ENCODE measurements at regions of chr15 and their contacts with region 1.

Region 1: DNA sequence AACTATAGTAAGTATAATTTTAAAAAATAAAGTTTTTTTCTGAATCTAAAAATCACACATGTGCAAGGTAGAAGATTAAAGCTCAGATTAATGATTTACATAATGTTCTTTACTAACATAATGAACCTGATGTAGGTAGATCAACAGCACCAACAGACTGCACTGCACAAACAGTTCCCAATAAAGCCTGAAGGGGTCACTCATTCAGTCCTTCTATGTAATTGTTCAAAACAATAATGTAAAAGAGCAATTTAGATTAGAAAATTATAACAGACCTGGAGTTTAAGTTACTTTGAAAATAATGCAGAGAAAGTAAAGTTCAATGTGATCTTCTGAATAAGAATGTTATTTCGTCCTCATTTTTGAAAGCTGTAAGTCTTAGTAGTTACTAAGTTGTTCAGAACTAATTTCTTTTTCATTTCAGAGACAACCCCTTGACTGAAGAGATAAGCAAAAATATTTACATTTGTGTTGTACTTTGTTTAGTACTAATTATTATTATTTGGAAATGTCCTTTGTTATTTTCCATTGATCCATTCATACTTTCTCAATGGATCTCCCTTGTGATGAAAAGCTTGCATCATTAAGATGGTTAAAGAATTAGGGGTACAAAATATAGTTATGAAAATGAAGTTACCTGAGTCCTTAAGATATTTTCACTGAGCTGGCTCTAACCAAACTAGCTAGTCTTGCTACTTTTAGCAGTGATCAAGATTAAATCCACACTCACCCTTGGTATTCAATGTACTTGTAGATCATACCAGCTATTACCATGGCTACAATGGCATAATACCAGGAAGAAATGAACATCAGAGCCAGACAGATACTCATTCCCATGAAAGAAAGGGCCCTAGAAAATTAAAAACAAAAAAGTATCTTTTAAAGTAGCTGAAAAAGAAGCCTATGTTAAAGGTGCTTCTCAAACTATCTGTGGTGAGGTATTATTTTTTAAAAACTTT is 16.8 kb downstream of the EMC4 start:
- DNase-seq: peak; percentile 55
- H3K4me3 Mint-ChIP-seq: no peak overlapping the region
- H3K27ac Mint-ChIP-seq: no peak overlapping the region
- H3K4me1 Mint-ChIP-seq: peaks cover 14% of the 10 kb centered on the region
- H3K27me3 Mint-ChIP-seq: no peaks in the 10 kb centered on the region

Region 2: GRCh38 chr15:34223904-34224596 is 17.6 kb before region 1 on chr15:
- CTCF ChIA-PET with region 1: interaction called, 10 read pairs
- DNase-seq: no peak
- H3K4me3 Mint-ChIP-seq: peak overlapping the region; percentile 96
- H3K27ac Mint-ChIP-seq: peak overlapping the region; percentile 94
- H3K4me1 Mint-ChIP-seq: peaks cover 38% of the 10 kb centered on the region
- H3K27me3 Mint-ChIP-seq: peaks cover 9% of the 10 kb centered on the region

Region 3: GRCh38 chr15:34327906-34328305 is 86.3 kb after region 1 on chr15:
- CTCF ChIA-PET with region 1: interaction called, 13 read pairs
- DNase-seq: no peak
- H3K4me3 Mint-ChIP-seq: peak overlapping the region; percentile 50
- H3K27ac Mint-ChIP-seq: peak overlapping the region; percentile 84
- H3K4me1 Mint-ChIP-seq: peaks cover 63% of the 10 kb centered on the region
- H3K27me3 Mint-ChIP-seq: no peaks in the 10 kb centered on the region

Region 4: DNA sequence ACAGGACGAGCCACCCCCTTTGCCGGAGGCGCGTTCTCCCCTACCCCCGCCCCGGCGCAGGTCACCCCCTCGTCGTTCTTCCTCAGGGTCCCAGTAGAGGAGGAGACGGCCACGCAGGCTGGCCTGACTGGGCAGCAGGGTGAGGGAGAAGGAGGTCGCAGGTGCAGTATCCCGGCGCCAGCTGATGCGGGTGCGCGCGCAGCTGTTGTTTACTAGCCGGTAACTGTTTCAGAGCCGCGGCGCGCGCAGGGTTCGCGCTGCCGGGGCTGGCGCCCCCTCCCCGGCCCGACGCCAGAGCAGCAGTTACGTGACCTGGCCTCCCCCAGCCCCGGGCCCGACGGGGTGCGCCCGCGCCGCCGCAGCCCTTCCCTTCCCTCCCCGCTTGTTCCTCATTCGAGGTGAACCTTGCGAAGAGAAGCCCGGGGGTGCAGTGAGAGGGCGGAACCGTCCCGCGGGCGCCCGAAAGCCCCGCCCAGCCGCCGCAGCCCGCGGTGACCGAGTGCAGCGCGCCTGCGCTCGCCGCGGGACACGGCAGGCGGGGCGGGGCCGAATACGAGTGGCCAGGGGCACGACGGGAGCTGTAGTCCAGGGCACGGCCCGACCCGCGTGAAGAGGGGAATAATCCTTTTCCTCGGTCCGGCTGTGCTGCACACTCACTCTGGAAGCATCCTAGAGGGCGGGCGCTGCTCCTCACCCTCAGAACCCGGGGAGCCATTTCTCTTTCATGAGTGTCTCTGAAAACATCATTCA is 96.1 kb after region 1 on chr15 and contains the start of gene SLC12A6:
- CTCF ChIA-PET with region 1: interaction called, 11 read pairs
- DNase-seq: peak; percentile 92
- H3K4me3 Mint-ChIP-seq: peak within 1 kb of the TSS; percentile 98
- H3K27ac Mint-ChIP-seq: peak within 1 kb of the TSS; percentile 93
- H3K4me1 Mint-ChIP-seq: peaks cover 62% of the 10 kb centered on the region
- H3K27me3 Mint-ChIP-seq: peaks cover 5% of the 10 kb centered on the region

Region 5: DNA sequence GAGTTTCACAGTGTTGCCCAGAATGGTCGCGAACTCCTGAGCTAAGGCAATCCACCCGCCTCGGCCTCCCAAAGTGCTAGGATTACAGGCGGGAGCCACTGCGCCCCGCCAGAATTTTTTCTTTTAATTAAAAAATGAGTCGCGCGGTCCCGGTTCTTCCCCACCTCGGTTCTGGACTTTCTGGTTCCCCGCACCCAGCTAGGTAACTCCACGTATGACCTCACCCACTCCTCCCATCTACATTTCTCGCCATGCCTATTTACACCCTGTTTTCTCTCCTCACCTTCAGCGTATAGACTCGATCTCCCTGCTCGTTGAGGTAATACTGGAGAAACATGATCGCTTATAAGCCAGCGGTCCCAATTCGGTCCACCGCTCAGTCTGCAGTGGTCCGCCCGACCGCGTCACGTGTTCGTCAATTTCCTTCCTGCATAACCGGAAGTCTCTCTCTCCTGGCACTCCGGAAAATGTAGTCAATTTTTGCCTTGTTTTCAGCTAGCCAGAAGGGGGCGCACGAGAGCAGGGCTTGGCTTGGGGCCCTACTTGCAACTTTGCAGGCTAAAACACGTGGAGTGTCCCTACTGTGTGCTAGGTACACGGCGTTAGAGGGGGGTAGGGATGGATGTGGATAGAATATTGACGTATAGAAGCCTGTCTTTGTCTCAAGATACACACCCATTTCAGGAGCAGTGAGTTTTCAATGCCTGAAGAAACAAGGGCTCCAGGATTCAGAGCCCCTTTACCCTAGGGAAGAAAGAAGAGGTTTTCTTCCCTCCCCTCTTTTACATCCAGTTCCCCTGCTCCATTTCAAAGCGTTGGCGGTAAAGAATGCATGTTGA is 101.3 kb after region 1 on chr15 and contains the starts of genes NOP10 and NUTM1:
- CTCF ChIA-PET with region 1: interaction called, 11 read pairs
- DNase-seq: peak; percentile 96
- H3K4me3 Mint-ChIP-seq: no peak within 1 kb of the TSS
- H3K27ac Mint-ChIP-seq: no peak within 1 kb of the TSS
- H3K4me1 Mint-ChIP-seq: peaks cover 24% of the 10 kb centered on the region
- H3K27me3 Mint-ChIP-seq: peaks cover 14% of the 10 kb centered on the region

Region 6: DNA sequence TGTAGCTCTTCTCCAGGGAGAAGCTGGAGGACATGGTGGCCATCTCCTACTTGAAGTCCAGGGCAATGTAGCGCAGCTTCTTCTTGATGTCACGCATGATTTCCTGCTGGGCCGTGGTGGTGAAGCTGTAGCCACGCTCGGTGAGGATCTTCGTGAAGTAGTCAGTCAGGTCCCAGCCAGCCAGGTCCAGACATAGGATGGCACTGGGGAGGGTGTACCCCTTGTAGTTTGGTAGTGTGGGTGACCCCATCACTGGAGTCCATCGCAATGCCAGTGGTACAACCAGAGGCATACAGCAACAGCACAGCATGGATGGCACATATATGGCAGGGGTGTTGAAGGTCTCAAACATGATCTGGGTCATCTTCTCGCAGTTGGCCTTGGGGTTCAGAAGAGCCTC is 132.3 kb after region 1 on chr15:
- CTCF ChIA-PET with region 1: no interaction called
- DNase-seq: no peak
- H3K4me3 Mint-ChIP-seq: no peak overlapping the region
- H3K27ac Mint-ChIP-seq: no peak overlapping the region
- H3K4me1 Mint-ChIP-seq: peaks cover 13% of the 10 kb centered on the region
- H3K27me3 Mint-ChIP-seq: no peaks in the 10 kb centered on the region

Region 7: DNA sequence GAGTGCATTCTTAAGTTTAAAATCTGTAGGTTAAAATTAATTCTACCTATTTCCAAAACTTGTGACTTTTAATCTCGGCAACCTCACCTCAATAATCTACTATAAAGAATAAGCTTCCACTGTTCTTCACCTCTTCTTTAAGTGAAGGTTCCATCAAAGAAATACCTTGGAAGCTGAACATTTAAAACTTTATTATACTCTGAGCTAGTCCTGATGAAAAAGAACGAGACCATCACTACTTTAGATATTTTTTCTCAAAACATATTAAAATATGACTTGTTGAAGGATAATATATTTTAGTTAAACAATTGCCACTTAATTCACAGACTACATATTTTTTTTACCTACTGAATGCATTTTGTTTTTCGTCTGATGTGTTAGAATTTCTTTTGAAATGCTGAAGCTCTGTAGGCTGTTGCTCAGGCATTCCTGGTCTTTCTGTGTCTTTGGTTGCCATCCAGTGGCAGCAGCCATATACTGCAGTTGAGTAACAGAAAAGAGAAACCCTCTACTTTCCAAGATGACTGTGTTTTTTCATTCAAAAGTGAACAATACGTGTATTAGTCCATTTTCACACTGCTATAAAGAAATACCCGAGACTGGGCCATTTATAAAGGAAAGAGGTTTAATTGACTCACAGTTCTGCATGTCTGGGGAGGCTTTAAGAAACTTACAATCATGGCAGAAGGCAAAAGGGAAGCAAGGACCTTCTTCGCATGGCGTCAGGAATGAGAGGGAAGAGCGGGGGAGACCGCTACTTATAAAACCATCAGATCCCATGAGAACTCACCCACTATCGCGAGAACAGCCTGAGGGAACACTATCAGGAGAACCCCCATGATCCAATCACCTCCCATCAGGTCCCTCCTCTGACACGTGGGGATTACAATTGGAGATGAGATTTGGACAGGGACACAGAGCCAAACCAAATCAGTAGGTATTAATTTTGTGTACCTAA is 346.3 kb after region 1 on chr15:
- CTCF ChIA-PET with region 1: interaction called, 17 read pairs
- DNase-seq: peak; percentile 77
- H3K4me3 Mint-ChIP-seq: peak overlapping the region; percentile 64
- H3K27ac Mint-ChIP-seq: peak overlapping the region; percentile 51
- H3K4me1 Mint-ChIP-seq: peaks cover 15% of the 10 kb centered on the region
- H3K27me3 Mint-ChIP-seq: peaks cover 38% of the 10 kb centered on the region